ENCODE measurements at regions of chr9 and their contacts with region 1.

Region 1: DNA sequence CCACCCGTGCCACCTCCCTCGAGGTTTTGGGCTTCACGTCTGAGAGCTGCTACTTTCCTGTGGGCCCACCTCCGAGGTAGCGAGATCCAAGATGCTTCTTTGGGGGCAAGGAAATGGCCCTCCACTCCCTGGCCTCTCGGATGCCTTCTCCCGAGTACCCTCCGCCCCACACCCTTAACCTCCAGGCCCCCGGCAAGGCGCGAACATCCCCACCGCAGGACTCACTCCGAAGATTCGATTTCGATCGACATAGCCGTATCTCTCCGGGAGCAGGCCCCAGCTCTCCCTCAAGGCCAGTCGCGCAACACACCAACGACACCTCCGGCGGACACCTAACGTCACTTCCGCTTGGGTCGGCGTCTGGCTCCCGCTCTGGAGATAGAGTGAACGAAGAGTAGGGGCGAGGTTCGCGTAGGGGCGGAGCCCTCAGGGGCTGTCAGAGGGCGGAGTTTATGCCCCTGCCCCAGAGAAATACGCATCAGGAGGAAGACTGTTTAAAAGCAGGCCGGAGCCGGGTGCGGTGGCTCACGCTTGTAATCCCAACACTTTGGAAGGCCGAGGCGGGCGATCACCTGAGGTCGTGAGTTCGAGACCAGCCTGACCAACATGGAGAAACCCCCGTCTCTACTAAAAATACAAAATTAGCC is at the start of gene SMU1:
- DNase-seq: peak; percentile 96
- H3K4me3 Mint-ChIP-seq: peak within 1 kb of the TSS; percentile 99
- H3K27ac Mint-ChIP-seq: peak within 1 kb of the TSS; percentile 99
- H3K4me1 Mint-ChIP-seq: peaks cover 28% of the 10 kb centered on the region
- H3K27me3 Mint-ChIP-seq: no peaks in the 10 kb centered on the region
- total RNA-seq, gene SMU1: 27.6 and 28.3 TPM in 2 replicates

Region 2: GRCh38 chr9:33024966-33025571 is 51.4 kb before region 1 on chr9 and contains the start of gene DNAJA1:
- intact Hi-C with region 1: loop called (anchors 1 kb)
- DNase-seq: peak; percentile 93
- H3K4me3 Mint-ChIP-seq: peak within 1 kb of the TSS; percentile 90
- H3K27ac Mint-ChIP-seq: peak within 1 kb of the TSS; percentile 96
- H3K4me1 Mint-ChIP-seq: peaks cover 53% of the 10 kb centered on the region
- H3K27me3 Mint-ChIP-seq: no peaks in the 10 kb centered on the region
- total RNA-seq, gene DNAJA1: 257 and 259 TPM in 2 replicates

Region 3: GRCh38 chr9:33116860-33117259 is 40.4 kb after region 1 on chr9:
- intact Hi-C with region 1: loop called (anchors 2 kb)
- DNase-seq: no peak
- H3K4me3 Mint-ChIP-seq: peak overlapping the region; percentile 37
- H3K27ac Mint-ChIP-seq: peak overlapping the region; percentile 84
- H3K4me1 Mint-ChIP-seq: peaks cover 21% of the 10 kb centered on the region
- H3K27me3 Mint-ChIP-seq: no peaks in the 10 kb centered on the region

Region 4: GRCh38 chr9:33151007-33151557 is 74.6 kb after region 1 on chr9:
- intact Hi-C with region 1: no loop called
- DNase-seq: no peak
- H3K4me3 Mint-ChIP-seq: no peak overlapping the region
- H3K27ac Mint-ChIP-seq: no peak overlapping the region
- H3K4me1 Mint-ChIP-seq: peaks cover 60% of the 10 kb centered on the region
- H3K27me3 Mint-ChIP-seq: no peaks in the 10 kb centered on the region

Region 5: GRCh38 chr9:33225319-33226149 is 149.1 kb after region 1 on chr9:
- intact Hi-C with region 1: loop called (anchors 1 kb)
- DNase-seq: peak; percentile 50
- H3K4me3 Mint-ChIP-seq: no peak overlapping the region
- H3K27ac Mint-ChIP-seq: peak overlapping the region; percentile 2
- H3K4me1 Mint-ChIP-seq: peaks cover 33% of the 10 kb centered on the region
- H3K27me3 Mint-ChIP-seq: no peaks in the 10 kb centered on the region

Region 6: GRCh38 chr9:33264473-33265177 is 188.1 kb after region 1 on chr9 and contains the starts of genes BAG1 and CHMP5:
- intact Hi-C with region 1: loop called (anchors 1 kb)
- DNase-seq: peak; percentile 100
- H3K4me3 Mint-ChIP-seq: peak within 1 kb of the TSS; percentile 98
- H3K27ac Mint-ChIP-seq: peak within 1 kb of the TSS; percentile 96
- H3K4me1 Mint-ChIP-seq: peaks cover 43% of the 10 kb centered on the region
- H3K27me3 Mint-ChIP-seq: no peaks in the 10 kb centered on the region
- total RNA-seq, gene BAG1: 62.0 and 68.9 TPM in 2 replicates
- total RNA-seq, gene CHMP5: 54.5 and 57.6 TPM in 2 replicates

Measured in activated T-helper 2 cell treated with anti-CD3 and anti-CD28 coated beads, Interferon-gamma antibody, Interleukin-2, Interleukin-4, amounts not matched to agents 10 μg/mL and 5 μg/mL and 100 μg/mL, durations not matched to agents 14 hours and 24 hours and 36 hours (primary cell).